Thyroid gland (tissue), 4 donors: ENCODE measurements at regions of chr5 and their contacts with region 1.

Region 1: GRCh38 chr5:178931846-178932760 is 8.9 kb upstream of the ZNF454 start:
- DNase-seq: no peak
- H3K4me3 ChIP-seq: no peak overlapping the region
- H3K27ac ChIP-seq: no peak overlapping the region
- H3K4me1 ChIP-seq: no peaks in the 10 kb centered on the region
- H3K27me3 ChIP-seq: no peaks in the 10 kb centered on the region
- CTCF ChIP-seq: no peak
- POLR2A ChIP-seq: no peak

Region 2: GRCh38 chr5:178890076-178890475 is 42.0 kb before region 1 on chr5:
- intact Hi-C with region 1: no loop called
- DNase-seq: no peak
- H3K4me3 ChIP-seq: no peak overlapping the region
- H3K27ac ChIP-seq: no peak overlapping the region
- H3K4me1 ChIP-seq: no peaks in the 10 kb centered on the region
- H3K27me3 ChIP-seq: no peaks in the 10 kb centered on the region
- CTCF ChIP-seq: no peak
- POLR2A ChIP-seq: no peak

Region 3: DNA sequence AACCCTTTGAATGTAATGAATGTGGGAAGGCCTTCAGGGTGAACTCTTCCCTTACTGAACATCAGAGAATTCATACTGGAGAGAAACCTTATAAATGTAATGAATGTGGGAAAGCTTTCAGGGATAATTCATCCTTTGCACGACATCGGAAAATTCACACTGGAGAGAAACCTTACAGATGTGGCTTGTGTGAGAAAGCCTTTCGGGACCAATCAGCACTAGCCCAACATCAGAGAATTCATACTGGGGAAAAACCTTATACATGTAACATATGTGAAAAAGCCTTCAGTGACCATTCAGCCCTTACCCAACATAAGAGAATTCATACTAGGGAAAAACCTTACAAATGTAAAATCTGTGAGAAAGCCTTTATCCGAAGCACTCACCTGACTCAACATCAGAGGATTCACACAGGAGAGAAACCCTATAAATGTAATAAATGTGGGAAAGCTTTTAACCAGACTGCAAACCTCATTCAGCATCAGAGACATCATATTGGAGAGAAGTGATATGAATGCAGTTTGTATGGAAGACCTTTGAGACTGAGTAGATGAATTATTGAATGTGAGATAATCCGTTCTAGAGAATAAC is 33.5 kb after region 1 on chr5:
- intact Hi-C with region 1: loop called (anchors 5 kb)
- DNase-seq: no peak
- H3K4me3 ChIP-seq: no peak overlapping the region
- H3K27ac ChIP-seq: no peak overlapping the region
- H3K4me1 ChIP-seq: no peaks in the 10 kb centered on the region
- H3K27me3 ChIP-seq: no peaks in the 10 kb centered on the region
- CTCF ChIP-seq: no peak
- POLR2A ChIP-seq: no peak

Region 4: DNA sequence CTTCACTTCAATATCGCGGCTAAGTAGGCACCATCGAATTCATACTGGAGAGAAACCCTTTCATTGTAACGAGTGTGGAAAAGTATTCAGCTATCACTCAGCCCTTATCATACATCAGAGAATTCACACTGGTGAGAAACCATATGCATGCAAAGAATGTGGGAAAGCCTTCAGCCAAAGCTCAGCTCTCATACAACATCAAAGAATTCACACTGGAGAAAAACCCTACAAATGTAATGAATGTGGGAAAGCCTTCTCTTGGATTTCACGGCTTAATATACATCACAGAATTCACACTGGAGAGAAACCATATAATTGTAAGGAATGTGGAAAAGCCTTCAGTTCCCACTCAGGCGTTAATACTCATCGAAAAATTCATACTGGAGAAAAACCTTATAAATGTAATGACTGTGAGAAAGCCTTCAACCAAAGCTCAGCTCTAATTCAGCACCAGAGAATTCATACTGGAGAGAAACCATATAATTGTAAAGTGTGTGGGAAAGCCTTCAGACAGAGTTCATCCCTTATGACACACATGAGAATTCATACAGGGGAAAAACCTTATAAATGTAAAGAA is 101.0 kb after region 1 on chr5:
- intact Hi-C with region 1: loop called (anchors 10 kb)
- DNase-seq: no peak
- H3K4me3 ChIP-seq: no peak overlapping the region
- H3K27ac ChIP-seq: no peak overlapping the region
- H3K4me1 ChIP-seq: no peaks in the 10 kb centered on the region
- H3K27me3 ChIP-seq: no peaks in the 10 kb centered on the region
- CTCF ChIP-seq: no peak
- POLR2A ChIP-seq: no peak

Region 5: GRCh38 chr5:179265514-179266290 is 333.6 kb after region 1 on chr5:
- intact Hi-C with region 1: no loop called
- DNase-seq: peak; percentile 90 to 91
- H3K4me3 ChIP-seq: no peak overlapping the region
- H3K27ac ChIP-seq: peak overlapping the region in 1 of 3 donors; percentile 30
- H3K4me1 ChIP-seq: peaks cover 11 to 22% of the 10 kb centered on the region in 2 donors
- H3K27me3 ChIP-seq: no peaks in the 10 kb centered on the region
- CTCF ChIP-seq: no peak
- POLR2A ChIP-seq: no peak